MCF 10A (cell line): ENCODE measurements at regions of chr18 and their contacts with region 1.

Region 1: DNA sequence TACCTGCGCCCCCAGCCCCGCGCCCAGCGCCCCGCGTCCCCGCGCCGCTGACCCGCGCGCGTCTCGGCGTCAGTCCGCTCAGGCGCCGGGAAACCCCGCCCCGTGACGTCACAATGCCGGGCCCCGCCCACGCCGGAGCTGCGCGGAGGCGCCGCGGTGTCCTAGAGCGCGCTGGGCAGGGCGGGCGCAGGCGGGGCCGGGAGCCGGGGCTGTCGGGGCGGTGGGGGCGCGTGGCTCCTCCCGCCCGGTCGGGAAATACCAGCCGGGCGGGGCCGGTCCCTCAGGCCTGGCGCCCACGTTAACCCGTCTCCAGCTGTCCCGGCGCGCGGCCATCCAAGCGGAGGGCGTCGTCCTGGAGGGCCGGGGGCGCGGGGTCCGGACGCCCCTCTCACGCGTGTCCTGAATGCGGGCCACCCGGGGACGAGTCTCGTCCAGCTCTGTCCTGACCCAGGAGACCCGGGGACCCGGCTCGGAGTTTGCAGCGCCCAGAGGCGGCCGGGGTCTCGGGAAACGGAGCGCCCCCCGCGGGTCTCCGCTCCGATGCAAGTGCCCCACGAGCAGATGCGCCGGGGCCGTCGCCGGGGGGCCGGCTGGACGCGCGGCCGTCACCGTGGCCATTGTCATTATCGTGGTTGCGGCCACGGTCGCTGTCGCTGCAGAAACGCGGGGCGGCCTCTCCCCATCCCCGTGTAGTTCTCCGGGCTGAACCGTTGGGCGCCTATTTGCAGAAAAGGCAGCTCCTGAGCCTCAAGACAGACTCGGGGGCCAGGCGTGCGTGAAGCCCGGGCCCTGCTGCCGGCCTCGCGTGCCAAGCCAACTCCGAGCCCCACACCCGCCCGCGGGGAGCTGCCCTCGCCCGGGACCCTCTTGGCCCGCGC is at the start of gene SLC66A2:
- DNase-seq: peak; percentile 78
- H3K4me3 Mint-ChIP-seq: peak within 1 kb of the TSS; percentile 75
- H3K27ac Mint-ChIP-seq: peak within 1 kb of the TSS; percentile 42
- H3K4me1 Mint-ChIP-seq: peaks cover 11% of the 10 kb centered on the region
- H3K27me3 Mint-ChIP-seq: no peaks in the 10 kb centered on the region
- CTCF ChIP-seq: no peak
- total RNA-seq, gene SLC66A2: 21.7 and 24.5 TPM in 2 replicates

Region 2: DNA sequence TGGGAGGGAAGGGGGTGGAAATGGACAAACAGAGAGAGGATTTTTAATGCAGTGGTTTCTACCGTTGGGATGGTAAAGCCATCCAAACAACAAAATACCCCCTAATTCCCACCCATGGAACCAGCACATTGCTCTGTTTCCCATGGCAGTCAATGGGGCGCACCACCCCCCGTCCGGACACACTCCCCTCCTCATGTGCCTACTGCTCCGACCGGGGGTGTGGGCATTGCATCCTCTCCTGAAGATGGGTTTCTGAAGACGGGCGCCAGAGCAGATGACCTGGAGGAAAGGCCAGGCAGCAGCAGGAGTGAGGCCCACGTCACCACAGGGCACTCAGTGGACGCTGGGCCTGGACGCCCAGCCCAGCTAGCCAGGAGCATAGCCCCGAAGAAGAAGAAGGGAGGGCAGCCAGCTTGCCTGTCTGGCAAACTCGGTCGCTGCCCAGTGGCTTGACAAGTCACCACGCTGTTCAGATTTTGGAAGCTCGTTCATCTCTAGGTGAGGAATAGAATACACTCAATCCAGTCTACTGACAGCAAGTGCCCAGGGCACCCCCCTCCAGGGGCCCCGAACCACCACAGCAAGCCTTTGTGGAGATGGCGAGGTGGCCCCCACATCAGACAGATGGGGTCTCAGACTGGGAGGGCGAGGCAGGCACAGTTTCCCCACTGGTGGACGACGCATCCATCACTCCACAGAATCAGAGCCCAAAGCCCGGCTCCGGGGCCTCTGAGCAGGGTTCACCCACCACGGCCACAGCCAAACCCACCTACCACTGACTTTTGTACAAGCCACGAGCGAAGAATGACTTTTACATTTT is 1268.4 kb before region 1 on chr18:
- CTCF ChIA-PET with region 1: no interaction called
- POLR2A ChIA-PET with region 1: no interaction called
- intact Hi-C with region 1: no loop called
- DNase-seq: no peak
- H3K4me3 Mint-ChIP-seq: no peak overlapping the region
- H3K27ac Mint-ChIP-seq: no peak overlapping the region
- H3K4me1 Mint-ChIP-seq: no peaks in the 10 kb centered on the region
- H3K27me3 Mint-ChIP-seq: no peaks in the 10 kb centered on the region
- CTCF ChIP-seq: no peak

Region 3: DNA sequence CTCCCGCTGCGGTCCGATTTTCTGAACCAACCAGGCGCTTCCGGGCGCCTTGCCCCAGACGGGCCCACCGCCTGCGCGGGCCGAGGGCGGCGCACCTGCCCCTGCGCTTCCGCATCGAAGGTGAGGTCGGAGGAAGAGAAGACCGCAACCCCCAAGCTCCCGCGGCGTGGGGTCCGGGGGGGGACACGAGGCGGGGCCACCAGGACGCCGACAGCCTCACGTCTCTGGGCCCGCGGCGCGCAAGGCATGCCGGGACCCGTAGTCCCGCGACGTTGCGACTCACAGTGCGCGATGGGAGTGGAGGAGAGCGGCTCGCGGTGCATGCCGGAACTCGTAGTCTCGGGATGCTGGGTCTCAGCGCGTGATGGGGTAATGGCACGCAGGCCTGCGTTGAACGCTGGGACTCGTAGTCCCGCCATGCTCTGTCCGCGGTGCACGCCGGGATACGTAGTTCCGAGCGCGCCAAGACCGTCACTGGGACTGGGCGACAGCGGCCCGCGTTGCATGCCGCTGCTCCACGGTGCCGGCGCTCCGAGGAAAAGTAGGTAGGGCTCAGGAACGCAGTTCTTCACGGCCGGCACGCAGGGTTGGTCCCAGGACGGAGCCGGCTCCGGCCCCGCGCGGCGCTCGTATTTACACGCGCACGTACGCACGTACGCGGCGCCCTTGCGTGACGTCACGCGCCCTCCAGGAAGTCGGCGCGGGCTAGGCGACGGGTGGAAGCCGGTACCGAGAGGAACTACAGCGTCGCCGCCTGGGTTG is 272.5 kb before region 1 on chr18 and contains the start of gene CTDP1:
- CTCF ChIA-PET with region 1: no interaction called
- POLR2A ChIA-PET with region 1: interaction called, 10 read pairs
- intact Hi-C with region 1: no loop called
- DNase-seq: peak; percentile 98
- H3K4me3 Mint-ChIP-seq: peak within 1 kb of the TSS; percentile 92
- H3K27ac Mint-ChIP-seq: peak within 1 kb of the TSS; percentile 97
- H3K4me1 Mint-ChIP-seq: peaks cover 5% of the 10 kb centered on the region
- H3K27me3 Mint-ChIP-seq: no peaks in the 10 kb centered on the region
- CTCF ChIP-seq: no peak
- total RNA-seq, gene CTDP1: 20.3 and 25.1 TPM in 2 replicates